PC-9 (cell line): ENCODE measurements at regions of chr7 and their contacts with region 1.

Region 1: DNA sequence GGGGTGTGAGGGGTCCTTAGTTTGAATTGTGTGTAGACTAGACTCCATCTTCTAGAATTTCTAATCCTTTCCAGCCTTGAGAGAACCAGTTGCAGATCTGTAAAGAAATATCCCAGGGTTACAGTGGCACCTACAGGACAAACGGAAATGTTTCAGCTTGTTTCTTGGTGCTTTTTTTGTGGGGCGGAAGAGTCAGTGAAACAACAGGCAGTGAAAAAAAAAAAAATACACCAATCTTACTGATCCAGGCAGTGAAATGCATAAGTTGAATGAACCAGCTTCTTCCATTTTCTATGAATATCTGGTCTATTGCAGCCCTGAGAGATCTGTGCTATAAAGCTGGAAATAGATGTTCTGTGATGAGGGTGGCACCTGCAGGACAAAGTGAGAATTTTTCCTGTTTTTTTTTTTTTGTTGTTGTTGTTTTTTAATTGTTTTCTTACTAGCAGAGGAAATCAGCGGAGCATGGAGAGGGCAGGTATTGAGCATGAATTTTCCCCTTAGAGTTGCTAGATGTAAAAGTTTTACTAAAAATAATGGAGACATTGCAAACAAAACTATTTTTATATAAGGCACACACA is 81.9 kb upstream of the DYNC1I1 start:
- DNase-seq: peak; percentile 37
- H3K4me3 ChIP-seq: no peak overlapping the region
- H3K27ac ChIP-seq: no peak overlapping the region
- H3K4me1 ChIP-seq: peaks cover 15% of the 10 kb centered on the region
- H3K27me3 ChIP-seq: no peaks in the 10 kb centered on the region
- CTCF ChIP-seq: peak; percentile 85

Region 2: DNA sequence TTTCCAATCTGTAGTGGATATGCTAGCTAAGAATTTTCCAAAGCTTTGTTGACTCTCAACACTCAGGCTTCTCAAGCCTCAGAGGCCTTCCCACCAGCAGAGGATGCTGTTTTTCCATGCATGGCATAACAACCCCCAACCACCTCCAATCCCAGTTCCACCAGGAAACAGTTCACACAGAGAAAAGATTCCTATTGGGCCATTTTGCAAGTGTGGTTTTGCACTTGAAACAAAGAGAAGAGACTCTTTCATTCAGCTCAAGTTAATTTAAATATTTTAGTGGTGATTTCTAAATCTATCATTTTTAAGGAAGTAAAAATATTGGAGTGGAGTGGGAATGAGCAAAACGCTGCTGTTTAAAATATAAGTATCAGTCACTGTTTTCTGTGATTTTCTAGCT is 1401.4 kb before region 1 on chr7:
- CTCF ChIA-PET with region 1: interaction called, 3 read pairs
- POLR2A ChIA-PET with region 1: no interaction called
- intact Hi-C with region 1: loop called (anchors 1 kb)
- DNase-seq: peak; percentile 48 to 57
- H3K4me3 ChIP-seq: no peak overlapping the region
- H3K27ac ChIP-seq: no peak overlapping the region
- H3K4me1 ChIP-seq: no peaks in the 10 kb centered on the region
- H3K27me3 ChIP-seq: no peaks in the 10 kb centered on the region
- CTCF ChIP-seq: peak; percentile 82

Region 3: DNA sequence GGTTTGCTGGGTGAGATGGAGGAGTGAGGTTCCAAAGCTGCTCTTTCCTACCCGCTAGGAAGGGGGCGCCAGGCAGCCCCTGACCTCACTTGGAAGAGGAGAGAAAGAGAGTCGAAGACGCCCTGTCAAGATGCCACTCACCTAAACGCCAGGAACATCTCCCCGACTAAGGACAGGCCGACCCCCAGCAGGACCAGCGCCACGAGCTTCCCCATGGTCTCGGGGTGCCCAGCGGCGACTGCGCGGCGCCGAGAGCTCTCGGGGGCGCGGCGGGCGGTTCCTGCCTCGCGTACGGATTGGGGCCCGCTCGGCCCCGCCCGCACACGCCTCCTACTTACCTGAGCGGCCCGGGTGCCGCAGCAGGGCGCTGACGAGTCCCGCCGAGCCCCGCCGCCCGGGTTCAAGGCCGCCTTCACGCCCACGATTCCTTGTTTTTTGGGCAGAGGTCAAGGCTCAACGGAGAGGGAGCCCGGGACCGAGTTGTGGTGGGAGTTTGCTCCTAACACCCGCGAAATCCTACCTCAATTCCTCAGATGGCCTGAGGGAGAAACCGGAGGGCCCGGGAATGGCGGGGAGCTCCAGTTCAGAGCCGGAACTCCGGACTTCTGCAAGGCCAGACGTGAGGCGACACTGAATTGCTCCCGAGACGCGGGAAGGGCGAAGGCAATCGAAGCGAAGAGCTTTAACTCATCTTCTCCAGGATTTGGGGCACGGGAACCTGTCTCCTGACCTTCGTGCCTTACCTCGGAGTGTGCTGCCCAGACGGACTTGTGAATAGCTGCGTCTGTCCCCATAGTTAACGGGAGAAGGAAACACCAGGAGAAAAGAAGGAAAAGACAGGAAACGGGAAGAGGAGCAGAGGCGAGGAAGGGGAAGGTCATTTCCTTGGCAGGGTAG is 294.1 kb before region 1 on chr7 and contains the start of gene PON3:
- CTCF ChIA-PET with region 1: no interaction called
- POLR2A ChIA-PET with region 1: no interaction called
- intact Hi-C with region 1: loop called (anchors 5 kb)
- DNase-seq: peak in 1 of 2 experiments; percentile 61
- H3K4me3 ChIP-seq: peak within 1 kb of the TSS; percentile 58
- H3K27ac ChIP-seq: no peak within 1 kb of the TSS
- H3K4me1 ChIP-seq: 0 out of 2 replicates have a peak, but pooled peaks cover 4% of the 10 kb centered on the region
- H3K27me3 ChIP-seq: no peaks in the 10 kb centered on the region
- CTCF ChIP-seq: peak; percentile 67
- total RNA-seq, gene PON3: 0.85 and 1.5 TPM in 2 replicates

Region 4: GRCh38 chr7:95527033-95527775 is 163.3 kb before region 1 on chr7:
- CTCF ChIA-PET with region 1: interaction called, 22 read pairs
- POLR2A ChIA-PET with region 1: no interaction called
- intact Hi-C with region 1: no loop called
- DNase-seq: peak; percentile 42 to 47
- H3K4me3 ChIP-seq: no peak overlapping the region
- H3K27ac ChIP-seq: no peak overlapping the region
- H3K4me1 ChIP-seq: peaks cover 10% of the 10 kb centered on the region; the same call in 1 of the 2 replicates
- H3K27me3 ChIP-seq: no peaks in the 10 kb centered on the region
- CTCF ChIP-seq: peak; percentile 95

Region 5: DNA sequence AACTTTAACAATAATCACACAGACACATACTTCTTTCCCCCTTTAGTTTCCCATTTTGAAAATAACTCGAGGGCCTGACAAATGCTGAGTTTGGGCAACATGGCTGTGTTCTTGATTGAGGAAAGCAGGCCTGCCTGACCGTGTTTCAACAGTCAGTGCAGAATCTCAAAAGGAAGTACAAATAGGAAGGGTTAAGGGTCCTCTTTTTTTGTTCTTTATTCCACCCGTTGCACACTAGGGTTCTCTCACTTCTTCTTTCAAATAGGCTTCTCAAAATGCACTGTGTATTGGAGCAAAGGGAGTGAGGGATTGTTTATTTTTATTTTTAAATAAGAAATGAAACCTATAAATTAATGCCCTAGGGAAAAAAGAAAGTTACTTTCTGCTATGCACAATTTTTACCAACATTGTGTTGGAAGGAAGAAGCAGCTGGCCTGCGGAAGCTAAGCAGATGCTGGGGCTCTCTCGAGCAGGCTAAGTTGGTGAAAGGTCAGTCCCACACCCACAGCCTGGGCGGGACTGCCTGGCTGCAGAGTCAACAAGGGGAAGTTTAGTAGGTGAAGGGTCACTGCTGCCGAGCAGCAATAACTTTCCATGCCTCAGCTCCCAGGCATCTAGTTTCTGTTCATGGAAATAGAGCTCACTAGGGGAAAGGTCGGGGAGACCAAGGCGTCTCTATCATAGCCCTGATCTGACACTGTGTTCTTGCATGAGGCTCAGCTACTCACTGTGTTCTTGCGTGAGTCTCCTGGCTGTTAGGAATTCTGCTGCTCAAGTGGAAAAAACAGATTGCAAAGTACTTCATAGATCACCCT is 81.9 kb before region 1 on chr7:
- CTCF ChIA-PET with region 1: interaction called, 3 read pairs
- POLR2A ChIA-PET with region 1: interaction called, 16 read pairs
- intact Hi-C with region 1: no loop called
- DNase-seq: peak; percentile 88 to 97
- H3K4me3 ChIP-seq: peak overlapping the region; percentile 32; the same call in 1 of the 2 replicates
- H3K27ac ChIP-seq: peak overlapping the region; percentile 91
- H3K4me1 ChIP-seq: peaks cover 36% of the 10 kb centered on the region
- H3K27me3 ChIP-seq: no peaks in the 10 kb centered on the region
- CTCF ChIP-seq: no peak